ENCODE measurements at regions of chr17 and their contacts with region 1.

Region 1: GRCh38 chr17:81253358-81254131 is 14.4 kb downstream of the NDUFAF8 start:
- DNase-seq: no peak
- H3K4me3 ChIP-seq: no peak overlapping the region
- H3K27ac ChIP-seq: no peak overlapping the region
- H3K4me1 ChIP-seq: peaks cover 41% of the 10 kb centered on the region
- H3K27me3 ChIP-seq: no peaks in the 10 kb centered on the region
- CTCF ChIP-seq: peak; percentile 86

Region 2: GRCh38 chr17:81471804-81472456 is 218.4 kb after region 1 on chr17:
- intact Hi-C with region 1: loop called (anchors 10 kb)
- DNase-seq: no peak
- H3K4me3 ChIP-seq: peak overlapping the region; percentile 27
- H3K27ac ChIP-seq: no peak overlapping the region
- H3K4me1 ChIP-seq: peaks cover 6% of the 10 kb centered on the region
- H3K27me3 ChIP-seq: no peaks in the 10 kb centered on the region
- CTCF ChIP-seq: peak; percentile 17

Region 3: GRCh38 chr17:81601525-81602120 is 348.1 kb after region 1 on chr17:
- intact Hi-C with region 1: loop called (anchors 5 kb)
- DNase-seq: no peak
- H3K4me3 ChIP-seq: no peak overlapping the region
- H3K27ac ChIP-seq: no peak overlapping the region
- H3K4me1 ChIP-seq: peaks cover 21% of the 10 kb centered on the region
- H3K27me3 ChIP-seq: no peaks in the 10 kb centered on the region
- CTCF ChIP-seq: peak; percentile 88